ENCODE measurements at regions of chr13 and their contacts with region 1.

Region 1: DNA sequence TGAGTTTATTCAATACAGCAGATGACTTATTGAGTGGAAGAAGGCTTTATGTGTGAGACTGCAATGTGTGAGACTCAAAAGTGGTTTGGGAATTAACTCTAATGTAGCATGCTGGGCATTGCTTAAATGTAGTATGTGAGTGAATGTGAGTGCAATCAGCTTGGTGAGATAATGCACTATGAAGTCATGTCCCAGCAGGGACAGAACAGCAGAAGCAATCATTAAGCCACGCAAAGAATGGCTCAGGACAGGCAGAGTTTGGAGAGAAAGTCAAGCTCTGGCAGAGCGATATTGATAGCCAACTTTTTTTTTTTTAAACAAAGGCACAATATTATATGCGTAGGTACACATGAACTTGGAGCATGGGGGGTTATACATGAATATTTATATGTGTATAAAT is 597.7 kb downstream of the GPC6 start:
- DNase-seq: no peak
- ATAC-seq: no peak
- H3K4me3 ChIP-seq: no peak overlapping the region
- H3K27ac ChIP-seq: no peak overlapping the region
- H3K4me1 ChIP-seq: no peaks in the 10 kb centered on the region
- H3K27me3 ChIP-seq: no peaks in the 10 kb centered on the region
- CTCF ChIP-seq: no peak
- EP300 ChIP-seq: no peak
- POLR2A ChIP-seq: no peak
- RAD21 ChIP-seq: no peak

Region 2: DNA sequence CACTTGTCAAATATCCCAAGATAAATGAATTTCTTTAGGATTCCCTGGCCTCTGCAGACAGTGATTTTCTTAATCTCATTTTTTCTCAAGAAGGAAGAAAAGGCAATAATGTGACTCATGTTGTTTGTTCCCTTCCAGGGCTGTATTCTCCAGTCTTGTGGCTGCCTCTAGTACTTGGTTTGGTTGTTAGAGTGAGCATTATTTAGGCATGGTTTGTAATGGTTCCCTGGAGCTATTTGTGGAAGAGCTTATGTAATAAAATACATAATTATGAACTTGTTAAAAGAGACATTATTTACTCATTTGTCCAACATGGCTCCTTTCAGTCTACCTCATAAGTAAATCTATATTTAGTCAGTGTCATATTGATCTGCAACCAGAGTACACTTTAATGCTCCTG is 384.8 kb after region 1 on chr13:
- CTCF ChIA-PET with region 1: no interaction called
- POLR2A ChIA-PET with region 1: no interaction called
- RAD21 ChIA-PET with region 1: no interaction called
- SMC1A ChIA-PET with region 1: no interaction called
- in situ Hi-C with region 1: no loop called
- intact Hi-C with region 1: loop called (anchors 10 kb)
- DNase-seq: no peak
- ATAC-seq: no peak
- H3K4me3 ChIP-seq: no peak overlapping the region
- H3K27ac ChIP-seq: no peak overlapping the region
- H3K4me1 ChIP-seq: no peaks in the 10 kb centered on the region
- H3K27me3 ChIP-seq: no peaks in the 10 kb centered on the region
- CTCF ChIP-seq: no peak
- EP300 ChIP-seq: no peak
- POLR2A ChIP-seq: no peak
- RAD21 ChIP-seq: no peak